ENCODE measurements at regions of chr7 and their contacts with region 1.

Region 1: DNA sequence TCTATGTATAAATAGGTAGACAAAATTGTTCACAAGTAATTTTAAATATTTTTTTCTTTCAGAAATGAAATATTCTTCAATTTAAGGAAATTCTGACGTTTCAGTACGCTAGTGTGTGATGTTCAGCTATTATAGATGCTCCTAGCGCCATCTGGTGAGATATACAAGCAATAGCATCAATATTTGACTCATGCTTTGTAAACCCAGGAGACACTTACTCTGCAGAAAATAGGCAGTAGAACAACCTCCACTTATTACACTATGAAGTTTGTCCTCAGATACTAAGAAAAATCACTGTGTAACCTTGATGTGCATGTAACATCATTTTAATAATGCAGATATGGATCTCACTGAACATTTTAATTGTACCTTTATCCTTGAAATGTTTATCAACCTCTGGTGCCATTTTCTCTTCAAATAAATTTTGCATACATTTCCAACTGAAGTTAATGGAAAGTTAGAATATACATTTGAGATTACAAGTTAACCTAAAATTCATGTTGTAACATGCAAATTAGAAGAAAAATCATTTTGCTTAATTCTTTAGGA is 151.5 kb upstream of the FAM3C start:
- DNase-seq: no peak
- ATAC-seq: peak; percentile 61
- H3K4me3 Mint-ChIP-seq: no peak overlapping the region
- H3K27ac Mint-ChIP-seq: no peak overlapping the region
- H3K4me1 Mint-ChIP-seq: peaks cover 29% of the 10 kb centered on the region
- H3K27me3 Mint-ChIP-seq: peaks cover 4% of the 10 kb centered on the region

Region 2: DNA sequence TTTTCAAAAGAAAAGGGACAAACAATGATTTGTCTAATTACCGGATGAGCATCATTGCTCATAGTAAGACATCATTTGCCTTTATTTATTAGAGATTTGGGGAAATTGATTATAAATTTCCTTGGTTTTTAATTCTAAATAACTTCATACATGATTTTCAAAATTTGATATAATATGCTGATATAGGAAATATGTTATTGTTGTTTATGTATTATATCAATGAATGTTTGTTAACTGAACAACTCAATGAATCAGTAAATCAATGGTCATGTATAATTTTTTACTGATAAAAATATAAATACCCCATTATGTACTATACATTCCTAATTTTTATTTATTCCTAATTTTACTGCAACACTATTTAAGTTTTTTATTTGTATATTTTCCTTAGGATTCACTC is 947.0 kb before region 1 on chr7:
- CTCF ChIA-PET with region 1: no interaction called
- POLR2A ChIA-PET with region 1: no interaction called
- intact Hi-C with region 1: no loop called
- DNase-seq: no peak
- ATAC-seq: no peak
- H3K4me3 Mint-ChIP-seq: no peak overlapping the region
- H3K27ac Mint-ChIP-seq: no peak overlapping the region
- H3K4me1 Mint-ChIP-seq: no peaks in the 10 kb centered on the region
- H3K27me3 Mint-ChIP-seq: no peaks in the 10 kb centered on the region

Region 3: GRCh38 chr7:120950539-120951308 is 596.9 kb before region 1 on chr7 and contains the start of gene ING3:
- CTCF ChIA-PET with region 1: no interaction called
- POLR2A ChIA-PET with region 1: no interaction called
- intact Hi-C with region 1: loop called in 1 of 2 experiments (anchors 10 kb)
- DNase-seq: peak; percentile 97
- ATAC-seq: peak; percentile 94
- H3K4me3 Mint-ChIP-seq: peak within 1 kb of the TSS; percentile 97
- H3K27ac Mint-ChIP-seq: peak within 1 kb of the TSS; percentile 97
- H3K4me1 Mint-ChIP-seq: peaks cover 22% of the 10 kb centered on the region
- H3K27me3 Mint-ChIP-seq: peaks cover 5% of the 10 kb centered on the region
- total RNA-seq, gene ING3: 23.4 to 26.5 TPM

Region 4: DNA sequence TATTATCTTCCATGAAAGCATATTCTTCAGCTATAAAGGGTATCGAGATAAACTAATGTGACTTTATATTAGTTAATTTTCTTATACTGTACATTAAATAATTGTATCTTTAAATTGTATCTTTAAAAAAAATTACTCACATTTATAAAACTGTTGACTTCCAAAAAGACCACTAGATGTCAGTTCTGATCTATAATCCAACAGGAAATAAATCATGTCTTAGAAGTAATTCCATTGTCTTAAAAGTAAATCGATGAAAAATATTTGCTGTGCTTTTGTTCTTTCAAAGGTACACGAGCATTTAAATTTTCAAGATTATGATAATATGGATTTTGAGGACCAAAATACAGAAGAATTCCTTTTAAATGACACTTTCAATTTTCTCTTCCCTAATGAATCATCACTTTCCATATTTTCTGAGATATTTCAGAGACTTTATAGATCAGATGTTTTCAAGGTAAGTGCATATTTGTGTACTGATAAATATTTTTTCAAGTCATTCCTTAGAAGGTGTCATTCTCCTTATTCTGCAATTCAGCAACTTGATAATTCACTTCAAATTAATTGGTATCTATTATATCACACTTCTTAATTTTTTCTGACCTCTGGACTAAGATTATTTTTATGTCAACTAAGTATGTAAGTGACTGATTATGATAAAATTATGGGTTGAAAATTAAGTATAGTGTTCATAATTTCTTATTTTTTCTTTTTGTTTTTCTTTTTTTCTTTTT is 420.6 kb before region 1 on chr7:
- CTCF ChIA-PET with region 1: no interaction called
- POLR2A ChIA-PET with region 1: no interaction called
- intact Hi-C with region 1: loop called (anchors 1 to 2 kb)
- DNase-seq: no peak
- ATAC-seq: no peak
- H3K4me3 Mint-ChIP-seq: no peak overlapping the region
- H3K27ac Mint-ChIP-seq: no peak overlapping the region
- H3K4me1 Mint-ChIP-seq: no peaks in the 10 kb centered on the region
- H3K27me3 Mint-ChIP-seq: peaks cover 11% of the 10 kb centered on the region

Region 5: GRCh38 chr7:121366852-121367431 is 180.7 kb before region 1 on chr7:
- CTCF ChIA-PET with region 1: interaction called, 86 read pairs
- POLR2A ChIA-PET with region 1: no interaction called
- intact Hi-C with region 1: loop called (anchors 1 kb)
- DNase-seq: peak; percentile 31
- ATAC-seq: no peak
- H3K4me3 Mint-ChIP-seq: no peak overlapping the region
- H3K27ac Mint-ChIP-seq: no peak overlapping the region
- H3K4me1 Mint-ChIP-seq: peaks cover 10% of the 10 kb centered on the region
- H3K27me3 Mint-ChIP-seq: no peaks in the 10 kb centered on the region

Region 6: DNA sequence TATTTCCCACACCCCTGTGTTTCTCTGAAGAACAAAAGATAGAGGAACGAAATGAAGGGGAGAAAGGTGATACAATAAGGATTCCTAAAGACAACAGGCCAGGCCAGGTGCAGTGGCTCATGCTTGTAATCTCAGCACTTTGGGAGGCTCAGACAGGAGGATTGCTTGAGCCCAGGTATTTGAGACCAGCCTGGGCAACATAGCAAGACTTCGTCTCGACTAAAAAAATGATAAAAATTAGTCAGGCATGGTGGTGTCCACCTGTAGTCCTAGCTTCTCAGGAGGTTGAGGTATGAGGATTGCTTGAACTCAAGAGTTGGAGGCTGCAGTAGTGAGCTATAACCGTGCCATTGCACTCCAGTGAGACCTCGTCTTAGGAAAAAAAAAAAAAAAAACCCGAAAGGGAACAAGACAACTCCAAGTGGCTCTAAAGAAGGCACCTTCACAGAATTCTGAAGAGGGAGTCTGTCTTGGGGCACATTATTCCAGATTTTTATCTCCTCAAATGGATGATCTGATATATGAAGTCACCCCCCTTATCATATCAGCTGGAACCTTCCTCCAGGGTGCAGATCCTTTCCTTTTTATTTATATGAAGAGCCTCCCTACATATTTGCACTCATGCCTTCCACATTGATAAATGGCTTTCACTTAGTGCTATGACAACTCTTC is 110.0 kb before region 1 on chr7:
- CTCF ChIA-PET with region 1: interaction called, 5 read pairs
- POLR2A ChIA-PET with region 1: no interaction called
- intact Hi-C with region 1: loop called in 1 of 2 experiments (anchors 2 kb)
- DNase-seq: no peak
- ATAC-seq: no peak
- H3K4me3 Mint-ChIP-seq: peak overlapping the region; percentile 12
- H3K27ac Mint-ChIP-seq: peak overlapping the region; percentile 79
- H3K4me1 Mint-ChIP-seq: peaks cover 24% of the 10 kb centered on the region
- H3K27me3 Mint-ChIP-seq: no peaks in the 10 kb centered on the region

Region 7: DNA sequence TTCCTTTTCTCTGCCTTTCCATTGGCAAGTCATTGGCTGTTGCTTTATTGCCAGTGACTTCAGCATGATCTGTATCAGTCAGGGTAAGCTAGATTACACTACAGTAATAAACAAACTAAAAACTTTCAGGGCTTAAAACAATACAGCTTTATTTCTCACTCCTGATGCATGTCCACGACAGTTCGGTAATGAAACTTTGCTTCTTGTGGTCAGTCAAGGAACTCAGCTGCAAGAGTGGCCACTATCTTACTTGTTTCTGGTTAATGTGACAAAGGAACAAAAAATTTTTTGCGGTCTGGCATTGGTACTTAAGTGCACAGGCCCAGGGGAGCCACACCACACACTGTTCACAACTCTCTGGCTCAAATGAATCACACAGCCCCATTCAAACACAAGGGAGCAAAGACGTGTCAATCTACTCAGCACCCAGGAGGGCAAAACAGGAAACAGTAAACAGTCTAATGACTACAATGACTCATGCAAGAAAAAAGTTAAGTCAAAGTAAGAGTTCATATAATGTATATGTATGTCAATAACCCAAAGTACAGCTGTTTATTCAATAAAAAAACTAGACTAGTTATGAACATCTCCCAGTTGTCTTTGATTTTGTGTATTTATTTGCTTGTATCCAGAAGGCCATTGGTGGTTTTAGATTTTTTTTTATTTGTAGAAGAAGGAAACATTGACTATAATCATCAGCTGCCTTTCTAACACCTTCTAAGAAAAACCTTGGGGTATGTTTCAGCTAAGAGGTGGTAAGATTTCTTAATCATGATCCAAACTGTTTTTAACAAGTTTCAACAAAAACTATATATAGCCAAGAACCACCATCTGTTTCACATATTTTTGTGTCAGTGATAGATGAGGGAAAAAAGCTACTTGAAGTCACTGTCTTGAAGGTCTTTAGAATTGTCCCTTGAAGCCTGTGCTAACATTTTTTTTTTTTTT is 17.1 kb before region 1 on chr7:
- CTCF ChIA-PET with region 1: interaction called, 7 read pairs
- POLR2A ChIA-PET with region 1: no interaction called
- intact Hi-C with region 1: loop called (anchors 1 kb)
- DNase-seq: peak; percentile 64
- ATAC-seq: peak; percentile 97
- H3K4me3 Mint-ChIP-seq: no peak overlapping the region
- H3K27ac Mint-ChIP-seq: peak overlapping the region; percentile 77
- H3K4me1 Mint-ChIP-seq: peaks cover 17% of the 10 kb centered on the region
- H3K27me3 Mint-ChIP-seq: peaks cover 14% of the 10 kb centered on the region